Adrenal gland (tissue), 19 donors: ENCODE measurements at regions of chr1 and their contacts with region 1.

Region 1: DNA sequence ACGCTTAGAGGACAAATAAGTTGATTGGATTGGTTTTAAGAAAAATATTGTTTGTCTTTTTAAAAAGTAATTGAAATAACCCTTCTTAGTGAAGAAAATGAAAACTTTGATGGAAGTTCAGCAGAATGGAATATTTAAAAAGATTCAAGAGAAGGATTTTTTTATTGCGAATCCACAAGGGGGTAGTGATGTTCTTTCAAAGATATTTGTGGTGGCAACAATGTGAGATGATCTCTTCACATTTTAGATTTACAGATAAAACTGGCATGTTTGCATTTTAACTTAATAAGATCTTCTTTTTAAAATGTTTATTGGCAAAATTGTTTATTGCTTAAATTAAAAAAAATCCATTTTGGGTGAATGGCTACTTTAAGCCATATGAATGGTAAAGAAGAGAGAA is 8.9 kb downstream of the CAMTA1 start:
- DNase-seq: no peak
- H3K4me3 ChIP-seq: no peak overlapping the region
- H3K27ac ChIP-seq: no peak overlapping the region
- H3K4me1 ChIP-seq: peaks cover 0 to 37% of the 10 kb centered on the region in 2 donors
- H3K27me3 ChIP-seq: no peaks in the 10 kb centered on the region
- CTCF ChIP-seq: peak; percentile 15 to 69 (median 56)
- POLR2A ChIP-seq: no peak

Region 2: GRCh38 chr1:6870086-6870485 is 75.9 kb after region 1 on chr1:
- intact Hi-C with region 1: loop called in 1 of 2 experiments (anchors 5 kb)
- DNase-seq: no peak
- H3K4me3 ChIP-seq: no peak overlapping the region
- H3K27ac ChIP-seq: no peak overlapping the region
- H3K4me1 ChIP-seq: peaks cover 7 to 33% of the 10 kb centered on the region in 2 donors
- H3K27me3 ChIP-seq: no peaks in the 10 kb centered on the region
- CTCF ChIP-seq: no peak
- POLR2A ChIP-seq: no peak

Region 3: GRCh38 chr1:6889875-6890480 is 95.8 kb after region 1 on chr1:
- intact Hi-C with region 1: loop called in 1 of 2 experiments (anchors 5 kb)
- DNase-seq: peak; percentile 69 to 88 (median 76)
- H3K4me3 ChIP-seq: no peak overlapping the region
- H3K27ac ChIP-seq: no peak overlapping the region
- H3K4me1 ChIP-seq: peaks cover 1 to 11% of the 10 kb centered on the region in 2 donors
- H3K27me3 ChIP-seq: no peaks in the 10 kb centered on the region
- CTCF ChIP-seq: peak; percentile 69 to 91 (median 81)
- POLR2A ChIP-seq: no peak